Gastrocnemius medialis (tissue), 4 donors: ENCODE measurements at regions of chr2 and their contacts with region 1.

Region 1: GRCh38 chr2:24920098-24920808 is at the start of gene ADCY3:
- DNase-seq: no peak
- ATAC-seq: peak; percentile 57 to 70
- H3K4me3 ChIP-seq: peak within 1 kb of the TSS; percentile 55 to 65 (median 62)
- H3K27ac ChIP-seq: peak within 1 kb of the TSS; percentile 51 to 63 (median 57)
- H3K4me1 ChIP-seq: no peaks in the 10 kb centered on the region
- H3K27me3 ChIP-seq: no peaks in the 10 kb centered on the region
- CTCF ChIP-seq: no peak
- POLR2A ChIP-seq: peak; percentile 7 to 19
- total RNA-seq, gene ADCY3: 3.9 to 16.6 (median 12.3) TPM

Region 2: GRCh38 chr2:24881158-24882022 is 38.9 kb before region 1 on chr2:
- in situ Hi-C with region 1: no loop called
- intact Hi-C with region 1: loop called (anchors 5 kb)
- DNase-seq: no peak
- ATAC-seq: no peak
- H3K4me3 ChIP-seq: no peak overlapping the region
- H3K27ac ChIP-seq: no peak overlapping the region
- H3K4me1 ChIP-seq: peaks cover 3% of the 10 kb centered on the region in 2 donors
- H3K27me3 ChIP-seq: no peaks in the 10 kb centered on the region
- CTCF ChIP-seq: no peak
- POLR2A ChIP-seq: no peak